Activated CD8-positive, alpha-beta T cell treated with anti-CD3 and anti-CD28 coated beads, Interleukin-2, amount 10 ng/mL, durations not matched to agents 7 days and 5 days (primary cell): ENCODE measurements at regions of chr10 and their contacts with region 1.

Region 1: GRCh38 chr10:80187465-80188409 is 17.6 kb downstream of the ANXA11 start:
- DNase-seq: peak; percentile 92
- ATAC-seq: peak; percentile 93
- H3K4me3 Mint-ChIP-seq: peak overlapping the region; percentile 55
- H3K27ac Mint-ChIP-seq: peak overlapping the region; percentile 89
- H3K4me1 Mint-ChIP-seq: peaks cover 69% of the 10 kb centered on the region
- H3K27me3 Mint-ChIP-seq: no peaks in the 10 kb centered on the region

Region 2: GRCh38 chr10:80205478-80206276 is 17.9 kb after region 1 on chr10 and contains the start of gene ANXA11:
- CTCF ChIA-PET with region 1: interaction called, 44 read pairs
- POLR2A ChIA-PET with region 1: interaction called, 80 read pairs
- DNase-seq: peak; percentile 88
- ATAC-seq: peak; percentile 87
- H3K4me3 Mint-ChIP-seq: peak within 1 kb of the TSS; percentile 95
- H3K27ac Mint-ChIP-seq: peak within 1 kb of the TSS; percentile 91
- H3K4me1 Mint-ChIP-seq: peaks cover 50% of the 10 kb centered on the region
- H3K27me3 Mint-ChIP-seq: no peaks in the 10 kb centered on the region
- total RNA-seq, gene ANXA11: 249 to 277 TPM